ENCODE measurements at regions of chr11 and their contacts with region 1.

Region 1: GRCh38 chr11:48109046-48109666 is 107.5 kb upstream of the OR4B1 start:
- ATAC-seq: peak; percentile 42 to 71 (median 62)
- H3K4me3 ChIP-seq: peak overlapping the region in 4 of 5 donors; percentile 18 to 29 (median 22)
- H3K27ac ChIP-seq: peak overlapping the region; percentile 34 to 73
- H3K4me1 ChIP-seq: peaks cover 16 to 21% of the 10 kb centered on the region in 2 donors

Region 2: GRCh38 chr11:47766305-47767227 is 342.6 kb before region 1 on chr11:
- in situ Hi-C with region 1: loop called in 1 of 9 experiments (anchors 25 kb)
- ATAC-seq: peak in 3 of 8 experiments; percentile 2 to 5 (median 4)
- H3K4me3 ChIP-seq: peak overlapping the region; percentile 65 to 88 (median 82)
- H3K27ac ChIP-seq: peak overlapping the region; percentile 90 to 91
- H3K4me1 ChIP-seq: peaks cover 6 to 12% of the 10 kb centered on the region in 2 donors

Region 3: DNA sequence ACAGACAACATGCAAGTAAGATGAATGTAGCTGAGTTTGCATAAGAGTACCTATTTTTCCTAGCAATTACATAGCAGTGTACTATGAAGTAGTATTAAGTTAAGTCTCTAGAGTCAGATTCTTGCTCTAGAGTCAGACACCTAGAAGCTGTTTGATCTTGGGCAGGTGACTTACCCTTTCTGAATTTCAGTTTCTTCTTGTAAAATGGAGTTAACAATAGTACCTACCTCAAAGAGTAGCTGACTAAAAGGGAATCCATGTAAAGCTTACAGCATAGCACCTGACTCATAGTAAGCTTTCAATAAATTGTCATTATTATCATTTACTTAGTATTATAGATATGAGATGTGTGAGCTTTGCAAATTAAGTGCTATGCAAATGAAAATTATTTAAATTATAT is 176.6 kb before region 1 on chr11:
- in situ Hi-C with region 1: loop called in 6 of 9 experiments (anchors 10 to 25 kb)
- ATAC-seq: no peak
- H3K4me3 ChIP-seq: no peak overlapping the region
- H3K27ac ChIP-seq: no peak overlapping the region
- H3K4me1 ChIP-seq: no peaks in the 10 kb centered on the region

Region 4: GRCh38 chr11:47946682-47947575 is 162.2 kb before region 1 on chr11:
- in situ Hi-C with region 1: loop called in 5 of 9 experiments (anchors 25 kb)
- ATAC-seq: peak; percentile 38 to 98 (median 58)
- H3K4me3 ChIP-seq: no peak overlapping the region
- H3K27ac ChIP-seq: no peak overlapping the region
- H3K4me1 ChIP-seq: no peaks in the 10 kb centered on the region

Measured in motor neuron (in vitro differentiated cells).